ENCODE measurements at regions of chr9 and their contacts with region 1.

Region 1: GRCh38 chr9:110217656-110218099 is 9.7 kb upstream of the C9orf152 start:
- DNase-seq: no peak

Region 2: GRCh38 chr9:109584205-109584604 is 633.5 kb before region 1 on chr9:
- intact Hi-C with region 1: loop called in 1 of 2 experiments (anchors 10 kb)
- DNase-seq: no peak

Region 3: DNA sequence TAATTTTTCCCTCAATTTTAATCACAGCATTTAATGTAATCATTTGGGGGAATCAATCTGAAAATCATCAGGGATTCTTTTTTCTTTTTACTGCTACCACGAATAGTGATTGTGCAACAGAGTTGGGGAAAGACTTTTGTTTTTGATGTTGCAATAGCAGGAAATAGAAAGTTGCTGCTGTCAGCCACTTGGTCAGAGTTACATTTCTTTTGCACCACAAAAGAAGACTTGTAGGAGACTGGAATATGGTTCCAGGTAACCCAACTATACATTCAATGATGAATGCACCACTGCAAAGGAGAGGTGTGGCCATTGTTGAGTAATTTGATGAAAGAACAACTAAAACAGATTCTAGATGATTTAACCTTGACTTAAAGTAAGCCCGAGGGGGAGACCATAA is 484.0 kb before region 1 on chr9:
- intact Hi-C with region 1: no loop called
- DNase-seq: no peak

Region 4: DNA sequence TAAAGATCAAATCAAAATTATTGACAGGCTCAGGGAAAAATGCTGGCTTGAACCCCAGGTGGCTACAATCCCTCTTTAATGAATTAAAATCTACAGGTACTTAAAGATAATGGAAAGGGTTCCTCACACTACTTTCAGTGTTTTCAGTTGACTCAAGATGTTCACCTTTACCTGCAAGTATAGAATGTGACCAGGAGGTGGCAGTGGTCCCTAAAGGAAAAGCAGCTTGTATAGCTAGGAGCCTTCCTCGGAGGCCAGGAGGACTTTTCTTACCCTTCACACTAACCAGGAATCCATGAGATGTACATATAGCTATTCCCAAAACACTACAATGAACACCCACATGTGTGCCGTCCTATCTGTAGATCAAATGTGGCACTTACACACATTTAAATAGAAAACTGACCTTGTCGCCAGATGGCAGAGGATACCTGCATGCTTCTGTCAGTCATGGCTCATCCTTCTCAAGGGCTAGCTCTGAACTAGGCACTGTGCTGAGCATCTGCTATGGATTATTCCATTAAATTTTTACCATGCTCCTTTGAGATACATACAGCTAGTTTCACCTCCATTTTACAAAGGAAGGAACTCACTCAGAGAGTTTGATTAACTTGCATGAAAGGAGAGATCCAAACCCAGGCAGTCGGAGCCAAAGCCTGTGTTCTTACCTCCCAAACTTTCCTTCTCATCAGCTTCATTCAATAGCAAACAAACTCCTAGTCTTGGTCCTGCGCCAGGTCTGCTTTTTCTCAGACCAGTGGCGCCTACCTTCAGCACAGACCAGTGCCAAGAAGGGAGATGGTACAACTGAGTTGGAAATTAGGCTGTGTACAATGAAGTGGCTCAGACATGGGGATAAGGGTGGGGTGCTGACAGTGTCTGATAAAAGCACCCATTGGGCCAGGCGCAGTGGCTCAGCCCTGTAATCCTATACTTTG is 34.2 kb before region 1 on chr9:
- intact Hi-C with region 1: loop called in 1 of 2 experiments (anchors 5 kb)
- DNase-seq: no peak

Region 5: DNA sequence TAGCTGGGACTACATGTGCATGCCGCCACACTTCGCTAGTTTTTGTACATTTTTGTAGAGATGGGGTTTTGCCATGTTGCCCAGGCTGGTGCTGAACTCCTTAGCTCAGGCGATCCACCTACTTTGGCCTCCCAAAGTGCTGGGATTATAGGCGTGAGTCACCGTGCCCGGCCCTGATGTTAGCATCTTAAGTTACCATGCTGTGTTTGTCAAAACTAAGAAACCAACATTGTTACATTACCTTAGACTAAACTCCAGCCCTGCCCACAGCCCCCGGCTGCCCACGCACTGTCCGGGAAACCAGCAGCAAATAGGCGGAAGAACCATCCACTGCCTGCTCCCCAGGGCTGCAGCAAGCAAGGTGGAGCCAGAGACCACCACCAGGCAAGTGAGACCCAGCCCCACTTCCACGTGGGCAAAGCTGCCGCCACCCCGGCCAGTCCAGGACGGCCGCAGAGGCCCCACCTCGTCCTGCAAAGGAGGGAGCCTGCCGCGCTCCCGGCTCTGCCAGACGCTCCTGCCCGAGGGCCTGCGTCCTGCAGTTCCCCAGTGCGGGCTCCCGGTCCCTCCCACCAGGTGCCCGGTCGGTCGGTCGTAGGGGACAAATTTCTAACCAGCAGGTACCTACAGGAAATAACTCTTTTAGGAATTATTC is 74.4 kb after region 1 on chr9:
- intact Hi-C with region 1: loop called in 1 of 2 experiments (anchors 2 kb)
- DNase-seq: no peak

Measured in posterior vena cava (tissue), 2 donors.